MCF 10A (cell line): ENCODE measurements at regions of chr7 and their contacts with region 1.

Region 1: GRCh38 chr7:32891800-32892520 is 400 bp upstream of the KBTBD2 start:
- DNase-seq: peak; percentile 97
- H3K4me3 Mint-ChIP-seq: peak overlapping the region; percentile 93
- H3K27ac Mint-ChIP-seq: peak overlapping the region; percentile 99
- H3K4me1 Mint-ChIP-seq: peaks cover 32% of the 10 kb centered on the region
- H3K27me3 Mint-ChIP-seq: no peaks in the 10 kb centered on the region
- CTCF ChIP-seq: no peak

Region 2: DNA sequence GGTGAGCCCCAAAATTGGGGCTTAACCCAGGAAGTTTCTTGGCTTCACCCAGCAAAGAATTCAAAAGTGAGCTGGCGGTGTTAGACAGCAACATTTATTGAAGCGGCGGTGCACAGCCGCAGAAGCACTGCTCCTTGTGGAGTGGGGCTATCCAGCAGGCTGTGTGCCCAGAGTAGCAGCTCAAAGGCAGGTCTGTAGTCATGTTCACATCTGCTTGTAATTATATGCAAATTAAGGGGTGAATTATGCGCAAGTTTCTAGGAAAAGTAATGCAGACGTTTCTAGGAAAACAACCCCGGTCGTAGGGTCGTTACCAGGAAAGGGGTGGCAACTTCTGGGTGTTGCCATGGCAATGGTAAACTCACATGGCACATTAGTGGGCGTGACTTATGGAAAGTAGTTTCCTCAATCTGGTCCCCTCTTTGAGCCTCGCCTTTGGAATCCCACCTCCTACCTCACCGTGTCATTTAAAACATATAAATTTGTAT is 13.3 kb after region 1 on chr7:
- CTCF ChIA-PET with region 1: interaction called, 4 read pairs
- POLR2A ChIA-PET with region 1: interaction called, 14 read pairs
- intact Hi-C with region 1: no loop called
- DNase-seq: peak; percentile 26
- H3K4me3 Mint-ChIP-seq: peak overlapping the region; percentile 64
- H3K27ac Mint-ChIP-seq: no peak overlapping the region
- H3K4me1 Mint-ChIP-seq: no peaks in the 10 kb centered on the region
- H3K27me3 Mint-ChIP-seq: no peaks in the 10 kb centered on the region
- CTCF ChIP-seq: no peak

Region 3: GRCh38 chr7:32957326-32958045 is 65.5 kb after region 1 on chr7 and contains the start of gene FKBP9:
- CTCF ChIA-PET with region 1: no interaction called
- POLR2A ChIA-PET with region 1: interaction called, 92 read pairs
- intact Hi-C with region 1: no loop called
- DNase-seq: peak; percentile 89
- H3K4me3 Mint-ChIP-seq: peak within 1 kb of the TSS; percentile 80
- H3K27ac Mint-ChIP-seq: peak within 1 kb of the TSS; percentile 54
- H3K4me1 Mint-ChIP-seq: peaks cover 9% of the 10 kb centered on the region
- H3K27me3 Mint-ChIP-seq: no peaks in the 10 kb centered on the region
- CTCF ChIP-seq: no peak
- total RNA-seq, gene FKBP9: 111 and 139 TPM in 2 replicates

Region 4: DNA sequence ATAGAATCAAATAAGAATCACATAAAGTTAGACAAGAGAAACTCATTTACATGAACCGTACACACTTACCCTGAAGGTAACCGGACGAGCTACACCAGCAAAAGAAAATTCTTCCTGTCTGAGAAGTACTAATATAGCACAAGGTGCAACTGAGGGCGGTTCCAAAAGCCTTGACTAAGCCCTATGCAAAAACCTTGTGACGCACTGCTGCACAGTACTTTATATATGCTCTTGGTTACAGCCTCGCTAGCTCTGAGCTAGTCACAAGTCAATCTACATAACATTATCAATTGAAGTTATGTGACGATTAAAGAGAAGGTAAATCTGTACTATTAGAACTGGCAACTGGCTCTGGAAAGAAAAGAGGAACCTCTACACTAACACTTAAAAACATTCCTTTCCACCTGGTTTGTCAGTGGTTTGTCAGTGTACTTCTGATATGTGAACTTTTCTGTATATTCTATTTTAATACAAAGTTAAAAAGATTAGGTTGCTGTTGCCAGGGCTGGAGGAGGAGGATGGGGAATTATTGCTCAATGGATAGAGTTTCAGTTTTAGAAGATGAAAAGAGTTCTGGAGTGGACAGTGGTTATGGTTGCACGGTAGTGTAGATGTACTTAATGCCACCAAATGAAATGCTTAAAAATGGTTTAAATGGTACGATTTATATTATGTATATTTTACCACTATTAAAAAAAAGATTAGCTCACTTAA is 149.0 kb after region 1 on chr7:
- CTCF ChIA-PET with region 1: no interaction called
- POLR2A ChIA-PET with region 1: interaction called, 60 read pairs
- intact Hi-C with region 1: no loop called
- DNase-seq: peak; percentile 86
- H3K4me3 Mint-ChIP-seq: peak overlapping the region; percentile 65
- H3K27ac Mint-ChIP-seq: peak overlapping the region; percentile 76
- H3K4me1 Mint-ChIP-seq: peaks cover 18% of the 10 kb centered on the region
- H3K27me3 Mint-ChIP-seq: no peaks in the 10 kb centered on the region
- CTCF ChIP-seq: no peak

Region 5: GRCh38 chr7:33062782-33063443 is 171.0 kb after region 1 on chr7:
- CTCF ChIA-PET with region 1: interaction called, 3 read pairs
- POLR2A ChIA-PET with region 1: interaction called, 52 read pairs
- intact Hi-C with region 1: loop called (anchors 5 kb)
- DNase-seq: peak; percentile 92
- H3K4me3 Mint-ChIP-seq: peak overlapping the region; percentile 97
- H3K27ac Mint-ChIP-seq: peak overlapping the region; percentile 90
- H3K4me1 Mint-ChIP-seq: peaks cover 22% of the 10 kb centered on the region
- H3K27me3 Mint-ChIP-seq: no peaks in the 10 kb centered on the region
- CTCF ChIP-seq: no peak

Region 6: DNA sequence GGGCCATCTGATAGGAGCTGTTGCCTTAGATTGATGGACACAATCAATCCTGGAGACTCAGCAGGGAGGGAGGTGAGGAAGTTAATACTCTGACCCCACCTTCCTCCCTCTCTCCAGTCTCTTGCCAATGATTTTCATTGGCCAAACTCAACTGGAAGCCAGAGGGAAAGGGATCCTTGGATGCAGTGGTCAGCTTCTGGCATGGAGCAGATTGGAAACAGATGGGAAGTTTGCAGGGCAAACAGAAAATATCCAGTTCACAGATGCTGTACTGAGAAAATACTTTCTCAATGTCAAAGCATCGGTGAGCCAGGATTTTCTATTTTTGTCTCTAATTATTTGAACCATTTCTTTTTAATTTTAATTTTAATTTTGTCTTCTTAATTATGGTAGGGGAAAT is 408.2 kb after region 1 on chr7:
- CTCF ChIA-PET with region 1: no interaction called
- POLR2A ChIA-PET with region 1: no interaction called
- intact Hi-C with region 1: no loop called
- DNase-seq: no peak
- H3K4me3 Mint-ChIP-seq: no peak overlapping the region
- H3K27ac Mint-ChIP-seq: no peak overlapping the region
- H3K4me1 Mint-ChIP-seq: no peaks in the 10 kb centered on the region
- H3K27me3 Mint-ChIP-seq: no peaks in the 10 kb centered on the region
- CTCF ChIP-seq: no peak